Dendritic cell treated with granulocyte-macrophage colony-stimulating factor and Interleukin-4, amounts not matched to agents 40 ng/mL and 50 ng/mL, for 4 days (primary cell): ENCODE measurements at regions of chr2 and their contacts with region 1.

Region 1: DNA sequence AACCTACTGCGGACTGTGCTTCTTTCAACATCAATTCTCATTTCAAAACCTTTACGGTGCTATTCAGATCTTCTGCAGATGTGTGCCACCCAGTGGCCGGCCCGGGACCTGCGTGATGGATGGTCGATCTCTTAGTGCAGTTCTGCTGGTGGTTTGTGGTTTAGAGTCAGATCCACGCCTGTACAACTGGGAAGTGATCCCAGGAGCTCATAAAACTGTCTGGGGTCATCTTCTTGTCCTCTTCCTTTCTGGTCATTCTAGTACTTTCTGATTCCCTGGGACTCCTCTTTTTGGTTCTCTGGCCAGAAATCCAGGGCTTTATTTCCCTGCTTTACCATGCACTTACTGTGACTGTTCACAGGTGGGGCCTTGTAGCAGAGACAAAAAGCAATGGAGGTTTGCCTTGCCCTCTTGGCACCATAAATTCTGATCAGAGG is 15.8 kb upstream of the SELENOI start:
- H3K4me3 Mint-ChIP-seq: peak overlapping the region; percentile 25
- H3K27ac Mint-ChIP-seq: peak overlapping the region; percentile 77
- H3K4me1 Mint-ChIP-seq: peaks cover 23% of the 10 kb centered on the region
- H3K27me3 Mint-ChIP-seq: no peaks in the 10 kb centered on the region

Region 2: DNA sequence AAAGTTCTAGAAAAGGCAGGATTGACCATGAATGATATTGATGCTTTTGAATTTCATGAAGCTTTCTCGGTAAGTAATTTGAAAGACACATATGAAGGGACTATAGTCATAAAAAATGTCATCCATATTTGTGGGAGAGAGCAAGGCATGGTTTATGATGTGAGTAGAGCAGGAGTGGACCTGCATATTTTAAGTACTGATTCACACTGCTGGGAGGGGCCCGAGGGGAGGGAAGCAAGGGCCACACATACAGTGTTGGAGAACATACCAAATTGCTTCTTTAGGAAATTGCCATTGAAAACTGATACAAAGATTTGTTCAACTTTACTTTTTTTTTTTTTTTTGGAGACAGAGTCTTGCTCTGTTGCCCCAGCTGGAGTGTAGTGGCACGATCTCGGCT is 46.0 kb before region 1 on chr2:
- intact Hi-C with region 1: no loop called
- H3K4me3 Mint-ChIP-seq: no peak overlapping the region
- H3K27ac Mint-ChIP-seq: no peak overlapping the region
- H3K4me1 Mint-ChIP-seq: no peaks in the 10 kb centered on the region
- H3K27me3 Mint-ChIP-seq: no peaks in the 10 kb centered on the region

Region 3: DNA sequence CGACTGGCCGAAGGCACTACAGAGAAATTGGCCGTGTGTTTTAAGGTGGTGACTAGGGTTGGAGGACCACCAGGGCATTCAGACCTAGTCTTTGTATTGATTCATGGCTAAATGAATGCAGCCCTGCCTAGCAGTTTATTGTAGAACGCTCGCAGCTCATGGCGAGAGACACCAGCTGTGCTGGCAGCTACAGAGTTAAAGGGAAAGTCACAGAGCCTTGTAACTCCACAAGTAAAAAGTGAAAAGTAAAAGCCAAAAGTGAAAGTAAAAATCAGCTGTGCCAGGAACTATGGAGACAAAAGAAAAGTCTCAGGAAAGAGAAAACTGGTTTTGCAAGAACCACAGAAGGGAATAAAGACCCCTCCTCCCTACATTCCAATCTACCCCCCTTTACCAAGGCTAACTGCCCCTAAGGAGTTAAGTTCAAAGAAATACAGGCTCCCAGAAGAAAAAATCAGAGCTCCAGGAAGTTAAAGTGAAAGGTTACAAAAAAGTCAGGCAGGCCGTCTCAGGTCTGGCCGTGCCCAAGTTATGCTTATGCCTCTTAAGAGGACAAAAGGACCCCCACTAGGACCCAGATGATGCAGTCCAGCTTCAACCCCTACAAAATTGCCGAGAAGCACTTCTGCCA is 30.5 kb before region 1 on chr2:
- intact Hi-C with region 1: loop called (anchors 5 kb)
- H3K4me3 Mint-ChIP-seq: no peak overlapping the region
- H3K27ac Mint-ChIP-seq: no peak overlapping the region
- H3K4me1 Mint-ChIP-seq: no peaks in the 10 kb centered on the region
- H3K27me3 Mint-ChIP-seq: peaks cover 3% of the 10 kb centered on the region

Region 4: GRCh38 chr2:26469092-26469710 is 139.1 kb after region 1 on chr2:
- intact Hi-C with region 1: loop called (anchors 10 kb)
- H3K4me3 Mint-ChIP-seq: no peak overlapping the region
- H3K27ac Mint-ChIP-seq: no peak overlapping the region
- H3K4me1 Mint-ChIP-seq: peaks cover 5% of the 10 kb centered on the region
- H3K27me3 Mint-ChIP-seq: no peaks in the 10 kb centered on the region